ENCODE measurements at regions of chr13 and their contacts with region 1.

Region 1: DNA sequence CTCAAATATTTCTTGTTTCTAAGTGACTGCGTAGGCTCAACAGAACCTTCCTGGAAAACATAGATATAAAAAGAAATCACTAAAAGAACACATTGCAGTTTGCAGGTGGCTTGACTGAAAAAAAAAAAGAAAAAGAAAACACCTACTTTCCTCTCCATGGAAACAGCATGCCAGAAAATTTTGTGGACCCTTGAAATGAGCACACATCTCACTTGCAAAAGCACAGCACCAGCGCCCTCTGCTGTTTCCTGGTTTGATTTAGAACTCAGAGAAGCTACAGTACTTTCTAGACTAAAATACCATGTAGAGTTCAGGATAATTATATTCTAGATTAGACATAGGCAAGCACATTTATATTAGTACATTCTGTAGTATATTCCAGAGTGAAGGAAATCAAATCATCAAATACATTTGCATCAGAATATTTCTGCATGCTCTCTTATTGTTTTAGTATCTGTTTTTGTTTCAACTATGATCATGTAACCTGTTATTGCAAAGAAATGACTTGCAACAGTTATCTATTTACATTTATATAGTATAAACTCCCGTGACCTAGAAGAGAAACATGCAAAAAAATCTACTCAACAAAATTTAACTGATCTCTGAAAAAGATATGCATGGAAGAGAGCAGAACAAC is 22.3 kb upstream of the XPO4 start:
- DNase-seq: peak; percentile 26 to 68 (median 59)
- ATAC-seq: peak; percentile 72
- H3K4me3 ChIP-seq: no peak overlapping the region
- H3K4me3 Mint-ChIP-seq: no peak overlapping the region
- H3K27ac ChIP-seq: no peak overlapping the region
- H3K27ac Mint-ChIP-seq: no peak overlapping the region
- H3K4me1 ChIP-seq: no peaks in the 10 kb centered on the region
- H3K4me1 Mint-ChIP-seq: no peaks in the 10 kb centered on the region
- H3K27me3 ChIP-seq: no peaks in the 10 kb centered on the region
- H3K27me3 Mint-ChIP-seq: peaks cover 0 to 6% (median 0%) of the 10 kb centered on the region in 5 donors

Region 2: DNA sequence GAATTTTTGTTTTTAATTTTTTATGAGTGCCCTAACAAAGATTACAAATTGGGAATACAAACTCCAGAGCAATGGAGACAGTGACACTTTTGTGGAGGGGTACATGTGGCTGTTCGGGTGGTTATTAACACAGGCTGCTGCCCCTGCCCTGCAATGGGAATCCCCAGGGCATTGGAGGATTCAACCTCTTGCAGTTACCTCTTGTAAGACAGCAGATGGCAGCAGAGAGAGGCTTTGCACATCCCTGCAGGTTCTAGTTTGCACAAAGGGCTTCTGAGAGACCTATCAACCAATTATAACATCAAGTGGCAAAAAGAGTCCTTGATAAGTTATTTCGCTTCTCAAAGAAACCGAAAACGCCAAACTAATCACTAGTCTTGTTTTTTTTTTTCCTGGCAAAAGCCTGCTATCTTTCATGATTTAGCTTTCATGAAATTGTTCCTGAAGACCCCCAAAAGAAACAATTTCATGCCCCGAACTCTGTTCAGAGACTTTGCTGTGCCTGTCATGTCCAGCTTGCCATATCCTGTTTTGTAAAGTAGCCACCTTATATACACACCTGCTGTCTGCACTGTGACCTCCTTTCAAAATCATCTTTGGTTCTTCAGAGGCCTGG is 742.5 kb before region 1 on chr13:
- CTCF ChIA-PET with region 1: no interaction called
- POLR2A ChIA-PET with region 1: no interaction called
- intact Hi-C with region 1: loop called (anchors 1 to 2 kb)
- DNase-seq: peak in 7 of 9 donors; percentile 43 to 77 (median 67)
- ATAC-seq: peak; percentile 99
- H3K4me3 ChIP-seq: no peak overlapping the region
- H3K4me3 Mint-ChIP-seq: no peak overlapping the region
- H3K27ac ChIP-seq: no peak overlapping the region
- H3K27ac Mint-ChIP-seq: no peak overlapping the region
- H3K4me1 ChIP-seq: no peaks in the 10 kb centered on the region
- H3K4me1 Mint-ChIP-seq: no peaks in the 10 kb centered on the region
- H3K27me3 ChIP-seq: peaks cover 0 to 10% of the 10 kb centered on the region in 2 donors
- H3K27me3 Mint-ChIP-seq: peaks cover 37 to 48% (median 43%) of the 10 kb centered on the region in 5 donors

Region 3: GRCh38 chr13:20713751-20714150 is 211.1 kb before region 1 on chr13:
- CTCF ChIA-PET with region 1: interaction called, 8 read pairs
- POLR2A ChIA-PET with region 1: no interaction called
- intact Hi-C with region 1: loop called (anchors 1 kb)
- DNase-seq: no peak
- ATAC-seq: no peak
- H3K4me3 ChIP-seq: no peak overlapping the region
- H3K4me3 Mint-ChIP-seq: no peak overlapping the region
- H3K27ac ChIP-seq: no peak overlapping the region
- H3K27ac Mint-ChIP-seq: no peak overlapping the region
- H3K4me1 ChIP-seq: no peaks in the 10 kb centered on the region
- H3K4me1 Mint-ChIP-seq: peaks cover 5 to 13% (median 8%) of the 10 kb centered on the region in 7 donors
- H3K27me3 ChIP-seq: no peaks in the 10 kb centered on the region
- H3K27me3 Mint-ChIP-seq: peaks cover 0 to 7% (median 6%) of the 10 kb centered on the region in 5 donors

Region 4: DNA sequence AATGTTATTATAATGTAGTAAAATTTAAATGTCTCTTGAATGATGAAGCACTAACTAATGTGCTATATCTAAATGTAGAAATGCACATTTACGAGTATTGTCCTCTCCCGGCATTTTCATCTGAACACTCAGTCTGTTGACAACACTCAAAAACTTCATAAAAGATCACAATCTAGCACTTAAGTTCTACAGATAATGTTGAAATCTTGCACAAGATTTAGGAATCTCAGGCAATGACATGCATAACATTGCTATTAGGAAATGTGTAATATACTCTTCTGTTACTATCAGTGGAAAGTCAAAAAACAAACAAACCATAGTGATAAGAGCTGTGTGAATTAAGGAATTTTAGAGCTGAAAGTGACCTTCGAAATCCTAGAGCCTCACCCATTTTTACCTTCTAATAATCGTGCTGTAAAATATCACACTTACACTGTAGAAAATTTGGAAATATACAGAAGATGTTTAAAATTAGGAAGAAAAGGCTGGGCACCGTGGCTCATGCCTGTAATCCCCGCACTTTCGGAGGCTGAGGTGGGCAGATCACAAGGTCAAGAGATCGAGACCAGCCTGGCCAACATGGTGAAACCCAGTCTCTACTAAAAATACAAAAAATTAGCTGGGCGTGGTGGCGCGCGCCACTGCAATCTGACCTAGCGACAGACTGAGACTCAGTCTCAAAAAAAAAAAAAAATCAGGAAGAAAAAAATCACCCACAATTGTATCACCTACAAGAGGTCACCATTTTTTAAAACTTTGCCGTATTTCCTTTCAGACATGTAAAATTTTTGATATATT is 15.4 kb after region 1 on chr13:
- CTCF ChIA-PET with region 1: no interaction called
- POLR2A ChIA-PET with region 1: no interaction called
- intact Hi-C with region 1: no loop called
- DNase-seq: no peak
- ATAC-seq: no peak
- H3K4me3 ChIP-seq: no peak overlapping the region
- H3K4me3 Mint-ChIP-seq: no peak overlapping the region
- H3K27ac ChIP-seq: no peak overlapping the region
- H3K27ac Mint-ChIP-seq: no peak overlapping the region
- H3K4me1 ChIP-seq: no peaks in the 10 kb centered on the region
- H3K4me1 Mint-ChIP-seq: peaks cover 0 to 7% (median 3%) of the 10 kb centered on the region in 7 donors
- H3K27me3 ChIP-seq: no peaks in the 10 kb centered on the region
- H3K27me3 Mint-ChIP-seq: peaks cover 16 to 43% (median 22%) of the 10 kb centered on the region in 5 donors